Heart right ventricle (tissue), 16 donors: ENCODE measurements at regions of chr1 and their contacts with region 1.

Region 1: DNA sequence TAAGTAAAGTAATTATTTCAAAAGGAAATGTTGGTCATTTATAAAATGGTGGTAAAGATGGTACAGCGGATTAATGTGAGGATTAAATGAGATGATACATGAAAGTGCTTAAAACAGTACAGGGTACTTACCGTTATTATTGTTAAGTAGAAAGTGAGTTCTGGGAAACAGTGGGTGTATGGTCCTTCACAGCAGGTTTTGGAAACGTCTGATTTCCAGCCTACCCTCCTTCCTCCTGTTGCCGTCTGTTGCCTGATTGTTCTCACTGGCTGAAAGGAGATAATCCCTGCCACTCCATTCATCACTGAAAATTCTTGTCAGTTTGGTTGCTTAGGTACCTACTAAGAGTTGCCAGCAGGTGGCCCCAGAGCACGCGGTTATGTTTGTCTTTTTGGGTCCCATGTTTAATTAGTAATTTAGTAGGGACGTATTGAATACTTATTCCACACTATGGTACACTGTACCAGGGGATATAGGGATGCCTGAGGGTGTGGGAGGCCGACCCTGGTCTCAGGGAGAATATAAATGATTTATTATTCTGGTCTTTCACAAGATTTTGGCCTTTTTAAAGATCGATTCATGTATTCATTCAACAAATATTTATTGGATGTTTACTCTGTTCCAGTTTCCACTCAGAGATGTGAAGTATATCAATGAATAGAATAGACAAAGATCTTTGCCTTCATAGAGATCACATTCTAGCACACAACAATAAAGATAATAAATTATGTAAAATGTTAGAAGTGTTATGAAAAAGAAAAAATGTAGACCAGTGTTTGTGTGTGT is 30.8 kb upstream of the RPTN start:
- DNase-seq: peak; percentile 45 to 54
- ATAC-seq: peak in 7 of 8 donors; percentile 46 to 75 (median 68)
- H3K4me3 ChIP-seq: peak overlapping the region in 8 of 10 donors; percentile 57 to 69 (median 61)
- H3K27ac ChIP-seq: peak overlapping the region in 4 of 10 donors; percentile 52 to 69 (median 60)
- H3K4me1 ChIP-seq: peaks cover 0 to 15% (median 0%) of the 10 kb centered on the region in 9 donors
- H3K27me3 ChIP-seq: peaks cover 0 to 28% (median 0%) of the 10 kb centered on the region in 7 donors
- CTCF ChIP-seq: peak; percentile 42 to 80 (median 77)

Region 2: GRCh38 chr1:151920149-151920548 is 269.7 kb before region 1 on chr1:
- intact Hi-C with region 1: no loop called
- DNase-seq: no peak
- ATAC-seq: no peak
- H3K4me3 ChIP-seq: no peak overlapping the region
- H3K27ac ChIP-seq: no peak overlapping the region
- H3K4me1 ChIP-seq: peaks cover 0 to 8% (median 0%) of the 10 kb centered on the region in 9 donors
- H3K27me3 ChIP-seq: no peaks in the 10 kb centered on the region
- CTCF ChIP-seq: no peak

Region 3: GRCh38 chr1:152052606-152053005 is 137.2 kb before region 1 on chr1:
- intact Hi-C with region 1: loop called in 7 of 10 experiments (anchors 1 to 5 kb)
- DNase-seq: peak; percentile 81 to 84
- ATAC-seq: peak in 6 of 8 donors; percentile 31 to 57 (median 50)
- H3K4me3 ChIP-seq: no peak overlapping the region
- H3K27ac ChIP-seq: no peak overlapping the region
- H3K4me1 ChIP-seq: peaks cover 2 to 42% (median 11%) of the 10 kb centered on the region in 9 donors
- H3K27me3 ChIP-seq: peaks cover 0 to 48% (median 30%) of the 10 kb centered on the region in 7 donors
- CTCF ChIP-seq: peak; percentile 79 to 95 (median 91)

Region 4: DNA sequence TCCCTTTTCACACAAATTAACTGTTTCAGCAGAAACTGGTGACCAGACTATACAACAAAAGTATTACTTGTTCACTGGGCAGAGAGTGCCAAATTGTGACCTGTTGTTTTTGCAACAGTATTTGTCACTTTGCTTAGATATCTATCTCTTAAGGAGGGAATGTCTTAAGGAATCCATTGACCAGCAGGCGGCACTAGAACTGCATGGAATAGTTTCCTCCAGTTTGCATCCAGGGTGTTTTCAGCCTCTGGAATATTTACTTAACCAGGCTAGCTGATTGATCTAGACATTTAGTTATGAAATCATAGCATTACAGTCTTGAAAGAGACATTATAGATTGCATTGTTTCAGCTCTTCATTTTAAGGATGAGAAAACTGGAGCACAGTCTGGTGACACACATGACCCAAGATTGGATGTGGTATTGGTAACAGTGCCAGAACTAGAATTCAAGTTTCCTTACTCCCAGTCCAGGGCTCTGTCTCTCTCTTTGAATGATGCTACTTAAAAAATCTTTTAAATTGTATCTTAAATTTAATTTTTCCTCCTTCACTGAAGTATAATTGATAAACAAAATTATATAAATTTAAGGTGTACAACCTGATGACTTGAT is 47.8 kb before region 1 on chr1:
- intact Hi-C with region 1: loop called in 8 of 10 experiments (anchors 1 to 5 kb)
- DNase-seq: peak; percentile 13 to 53
- ATAC-seq: peak in 2 of 8 donors; percentile 49 to 60
- H3K4me3 ChIP-seq: no peak overlapping the region
- H3K27ac ChIP-seq: no peak overlapping the region
- H3K4me1 ChIP-seq: peaks cover 0 to 4% (median 0%) of the 10 kb centered on the region in 9 donors
- H3K27me3 ChIP-seq: peaks cover 0 to 31% (median 20%) of the 10 kb centered on the region in 7 donors
- CTCF ChIP-seq: peak; percentile 50 to 82 (median 70)

Region 5: DNA sequence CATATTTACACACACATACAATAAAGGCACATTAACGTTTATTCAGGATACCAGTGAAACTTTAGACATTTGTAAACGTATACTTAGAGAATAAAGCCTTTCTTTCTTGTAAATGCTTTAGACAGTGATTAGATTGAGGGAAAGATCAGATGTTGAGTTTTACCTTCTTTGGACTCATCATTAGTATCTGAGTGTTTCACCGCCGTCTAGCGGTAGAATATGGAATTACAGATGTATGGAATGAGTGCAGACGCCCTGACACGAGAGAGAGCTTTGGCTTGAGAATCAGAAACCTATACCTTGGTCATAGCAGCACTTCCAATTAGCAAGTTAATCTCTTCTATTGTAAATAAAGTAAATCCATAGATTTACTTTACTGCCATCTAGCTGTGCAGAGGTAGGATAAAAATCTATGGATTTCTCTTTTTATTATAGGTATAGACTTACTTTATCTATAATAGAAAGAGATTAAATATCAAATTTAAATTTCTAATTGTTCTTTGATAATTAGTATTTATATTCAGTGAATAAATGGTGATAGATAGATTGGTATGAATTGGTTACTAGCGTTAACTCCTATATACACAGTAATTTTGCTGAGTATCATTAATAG is 157.4 kb after region 1 on chr1:
- intact Hi-C with region 1: loop called in 3 of 10 experiments (anchors 1 to 10 kb)
- DNase-seq: peak in 1 of 2 donors; percentile 41
- ATAC-seq: no peak
- H3K4me3 ChIP-seq: no peak overlapping the region
- H3K27ac ChIP-seq: no peak overlapping the region
- H3K4me1 ChIP-seq: no peaks in the 10 kb centered on the region
- H3K27me3 ChIP-seq: peaks cover 0 to 5% (median 0%) of the 10 kb centered on the region in 7 donors
- CTCF ChIP-seq: peak; percentile 49 to 89 (median 76)

Region 6: GRCh38 chr1:152410599-152410998 is 220.7 kb after region 1 on chr1:
- intact Hi-C with region 1: no loop called
- DNase-seq: no peak
- ATAC-seq: peak in 1 of 8 donors; percentile 23
- H3K4me3 ChIP-seq: no peak overlapping the region
- H3K27ac ChIP-seq: no peak overlapping the region
- H3K4me1 ChIP-seq: no peaks in the 10 kb centered on the region
- H3K27me3 ChIP-seq: peaks cover 0 to 15% (median 0%) of the 10 kb centered on the region in 7 donors
- CTCF ChIP-seq: no peak

Region 7: GRCh38 chr1:152459596-152460528 is 270.0 kb after region 1 on chr1:
- intact Hi-C with region 1: loop called (anchors 1 to 5 kb)
- DNase-seq: peak; percentile 55 to 79
- ATAC-seq: peak in 7 of 8 donors; percentile 51 to 77 (median 69)
- H3K4me3 ChIP-seq: peak overlapping the region in 4 of 10 donors; percentile 3 to 33 (median 24)
- H3K27ac ChIP-seq: peak overlapping the region in 3 of 10 donors; percentile 12 to 82 (median 16)
- H3K4me1 ChIP-seq: peaks cover 0 to 12% (median 4%) of the 10 kb centered on the region in 9 donors
- H3K27me3 ChIP-seq: peaks cover 0 to 3% (median 0%) of the 10 kb centered on the region in 7 donors
- CTCF ChIP-seq: peak; percentile 66 to 83 (median 77)